PC-9 (cell line): ENCODE measurements at regions of chr6 and their contacts with region 1.

Region 1: DNA sequence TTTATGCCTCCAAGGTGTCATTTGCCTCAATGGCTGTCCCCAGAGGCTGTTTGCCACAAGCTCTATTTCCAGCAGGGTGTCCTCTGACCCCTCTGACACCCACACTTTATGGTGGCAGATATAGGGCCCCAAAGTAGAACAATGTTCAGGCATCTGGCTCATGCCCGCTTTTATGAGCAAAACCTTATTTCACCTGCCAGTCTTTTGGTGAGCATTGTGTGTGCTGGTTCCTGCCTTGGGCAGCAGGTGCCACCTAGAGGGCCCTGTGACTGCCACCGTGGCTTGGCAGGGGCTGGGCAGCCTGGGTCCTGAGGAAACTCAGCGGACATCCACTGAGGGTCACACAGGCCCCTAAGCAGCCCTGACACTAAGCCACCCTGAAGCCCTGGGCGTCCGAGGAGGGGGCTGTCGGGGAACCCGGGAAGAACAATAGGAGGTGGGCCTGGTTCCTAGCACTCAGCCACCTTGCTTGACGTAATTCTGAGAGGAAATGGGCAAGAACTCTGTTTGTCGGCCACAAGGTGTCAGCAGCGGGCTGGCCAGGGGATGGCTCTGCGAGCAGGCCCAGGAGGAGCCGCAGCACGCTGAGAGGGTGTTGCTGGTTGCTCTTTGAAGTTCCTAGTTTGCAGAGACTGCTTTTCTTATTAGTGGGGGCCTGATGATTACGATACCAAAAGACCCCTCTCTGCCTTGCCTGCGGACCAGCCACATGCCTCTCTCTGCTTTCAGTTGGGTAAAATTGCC is 148.9 kb downstream of the SCML4 start:
- DNase-seq: peak; percentile 64 to 78
- H3K4me3 ChIP-seq: peak overlapping the region; percentile 55; the same call in 1 of the 2 replicates
- H3K27ac ChIP-seq: no peak overlapping the region
- H3K4me1 ChIP-seq: no peaks in the 10 kb centered on the region; the same call in 1 of the 2 replicates
- H3K27me3 ChIP-seq: no peaks in the 10 kb centered on the region
- CTCF ChIP-seq: peak; percentile 97

Region 2: GRCh38 chr6:107132330-107132954 is 542.7 kb before region 1 on chr6:
- CTCF ChIA-PET with region 1: interaction called, 4 read pairs
- POLR2A ChIA-PET with region 1: no interaction called
- intact Hi-C with region 1: loop called (anchors 1 kb)
- DNase-seq: peak; percentile 44 to 46
- H3K4me3 ChIP-seq: no peak overlapping the region
- H3K27ac ChIP-seq: no peak overlapping the region
- H3K4me1 ChIP-seq: no peaks in the 10 kb centered on the region
- H3K27me3 ChIP-seq: no peaks in the 10 kb centered on the region
- CTCF ChIP-seq: peak; percentile 82

Region 3: GRCh38 chr6:107248147-107248546 is 427.0 kb before region 1 on chr6:
- CTCF ChIA-PET with region 1: interaction called, 12 read pairs
- POLR2A ChIA-PET with region 1: no interaction called
- intact Hi-C with region 1: no loop called
- DNase-seq: no peak
- H3K4me3 ChIP-seq: no peak overlapping the region
- H3K27ac ChIP-seq: no peak overlapping the region
- H3K4me1 ChIP-seq: no peaks in the 10 kb centered on the region
- H3K27me3 ChIP-seq: no peaks in the 10 kb centered on the region
- CTCF ChIP-seq: no peak

Region 4: DNA sequence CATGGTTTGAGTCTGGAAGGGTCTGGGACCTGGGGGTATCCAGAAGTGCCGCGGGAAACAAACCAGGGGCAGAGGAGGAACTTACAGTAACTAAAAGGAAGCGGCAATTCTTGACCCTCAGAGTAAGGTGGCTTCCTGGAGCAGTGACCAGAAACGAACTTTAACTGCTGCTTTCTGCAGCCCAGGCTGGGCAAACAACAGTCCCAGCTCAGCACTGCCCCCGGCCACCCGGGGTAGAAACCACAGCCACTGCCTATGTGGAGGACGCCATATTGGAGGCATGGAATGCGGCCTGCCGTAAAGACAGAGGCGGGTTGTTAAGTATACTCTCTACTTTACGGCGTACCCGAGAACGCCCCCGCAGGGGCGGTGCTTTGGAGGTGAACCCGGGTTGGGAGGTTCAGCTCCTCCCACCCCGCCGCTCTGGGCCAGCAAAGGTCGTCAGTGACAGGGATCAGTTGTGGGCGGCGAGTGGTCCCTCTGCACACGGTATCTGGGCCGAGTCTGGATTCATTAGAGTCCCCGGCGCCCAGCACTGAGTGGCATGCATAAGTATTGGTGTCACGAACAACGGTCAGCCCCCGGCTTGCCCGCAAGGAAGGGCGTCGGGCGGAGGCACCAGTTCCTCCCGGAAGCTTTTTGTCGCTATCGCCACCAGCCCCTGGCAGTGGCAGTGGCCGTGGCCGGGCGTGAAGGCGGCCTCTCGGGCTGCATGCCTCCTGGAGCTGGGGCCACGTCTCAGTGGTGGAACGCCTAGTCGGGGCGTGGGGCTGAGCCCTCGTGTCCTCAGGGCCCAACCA is 215.7 kb before region 1 on chr6 and contains the start of gene PDSS2:
- CTCF ChIA-PET with region 1: no interaction called
- POLR2A ChIA-PET with region 1: interaction called, 3 read pairs
- intact Hi-C with region 1: loop called (anchors 2 kb)
- DNase-seq: peak; percentile 96
- H3K4me3 ChIP-seq: peak within 1 kb of the TSS; percentile 82
- H3K27ac ChIP-seq: peak within 1 kb of the TSS; percentile 67
- H3K4me1 ChIP-seq: peaks cover 20% of the 10 kb centered on the region
- H3K27me3 ChIP-seq: no peaks in the 10 kb centered on the region
- CTCF ChIP-seq: peak; percentile 57; the same call in 1 of the 2 replicates
- total RNA-seq, gene PDSS2: 17.2 and 17.8 TPM in 2 replicates

Region 5: DNA sequence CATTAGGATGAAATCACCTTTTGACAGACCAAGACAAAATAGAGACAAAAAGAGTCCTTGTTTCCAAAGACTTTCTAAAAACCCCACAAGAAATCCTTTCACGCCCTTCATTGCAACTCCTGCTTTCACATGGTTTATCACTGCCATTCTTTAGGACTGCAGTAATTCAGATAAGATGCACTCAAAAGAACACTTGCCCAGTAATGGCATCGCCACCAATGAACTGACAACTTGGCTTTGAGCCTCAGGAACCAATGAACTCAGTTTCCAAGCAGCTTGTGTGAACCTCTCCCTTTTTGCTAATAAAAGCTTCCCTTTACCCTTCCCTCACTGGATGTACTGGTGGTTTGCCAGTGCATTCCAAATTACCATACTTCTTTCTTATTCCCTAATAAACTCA is 377.5 kb after region 1 on chr6:
- CTCF ChIA-PET with region 1: no interaction called
- POLR2A ChIA-PET with region 1: no interaction called
- intact Hi-C with region 1: loop called (anchors 1 kb)
- DNase-seq: no peak
- H3K4me3 ChIP-seq: no peak overlapping the region
- H3K27ac ChIP-seq: no peak overlapping the region
- H3K4me1 ChIP-seq: no peaks in the 10 kb centered on the region
- H3K27me3 ChIP-seq: no peaks in the 10 kb centered on the region
- CTCF ChIP-seq: no peak